ENCODE measurements at regions of chr15 and their contacts with region 1.

Region 1: DNA sequence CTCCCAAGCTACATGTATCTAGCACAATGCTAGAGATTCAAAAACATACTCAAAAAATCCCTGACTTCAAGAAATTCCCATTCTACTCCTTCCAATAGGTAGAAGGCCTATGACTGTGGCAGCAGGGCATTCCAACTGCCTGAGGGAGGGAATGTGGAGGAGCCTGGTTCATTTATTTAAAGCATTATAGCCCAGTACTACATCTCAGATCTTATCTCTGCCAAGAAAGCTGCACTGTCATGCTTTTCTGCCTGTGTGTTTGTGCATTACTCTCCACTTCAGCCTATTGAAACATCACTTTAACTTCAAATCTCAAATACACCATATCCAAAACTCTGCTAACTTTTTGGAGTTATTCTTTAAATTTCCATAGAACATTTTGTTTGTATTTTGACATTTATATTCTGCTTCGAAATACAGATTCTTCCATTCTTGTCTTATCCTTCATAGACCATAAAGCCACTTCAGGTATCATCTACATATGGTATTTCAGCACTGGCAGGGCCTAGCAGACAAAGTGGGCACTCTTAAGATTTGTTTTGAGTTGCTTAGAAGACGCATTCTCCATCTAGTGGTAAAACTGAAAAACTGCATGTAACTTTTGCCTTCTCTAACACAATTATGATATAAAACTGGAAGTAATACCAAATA is 59.1 kb upstream of the NEDD4 start:
- DNase-seq: peak in 7 of 9 donors; percentile 14 to 66 (median 55)
- ATAC-seq: peak; percentile 71
- H3K4me3 ChIP-seq: no peak overlapping the region
- H3K4me3 Mint-ChIP-seq: no peak overlapping the region
- H3K27ac ChIP-seq: no peak overlapping the region
- H3K27ac Mint-ChIP-seq: no peak overlapping the region
- H3K4me1 ChIP-seq: no peaks in the 10 kb centered on the region
- H3K4me1 Mint-ChIP-seq: peaks cover 0 to 5% (median 0%) of the 10 kb centered on the region in 7 donors
- H3K27me3 ChIP-seq: no peaks in the 10 kb centered on the region
- H3K27me3 Mint-ChIP-seq: no peaks in the 10 kb centered on the region

Region 2: DNA sequence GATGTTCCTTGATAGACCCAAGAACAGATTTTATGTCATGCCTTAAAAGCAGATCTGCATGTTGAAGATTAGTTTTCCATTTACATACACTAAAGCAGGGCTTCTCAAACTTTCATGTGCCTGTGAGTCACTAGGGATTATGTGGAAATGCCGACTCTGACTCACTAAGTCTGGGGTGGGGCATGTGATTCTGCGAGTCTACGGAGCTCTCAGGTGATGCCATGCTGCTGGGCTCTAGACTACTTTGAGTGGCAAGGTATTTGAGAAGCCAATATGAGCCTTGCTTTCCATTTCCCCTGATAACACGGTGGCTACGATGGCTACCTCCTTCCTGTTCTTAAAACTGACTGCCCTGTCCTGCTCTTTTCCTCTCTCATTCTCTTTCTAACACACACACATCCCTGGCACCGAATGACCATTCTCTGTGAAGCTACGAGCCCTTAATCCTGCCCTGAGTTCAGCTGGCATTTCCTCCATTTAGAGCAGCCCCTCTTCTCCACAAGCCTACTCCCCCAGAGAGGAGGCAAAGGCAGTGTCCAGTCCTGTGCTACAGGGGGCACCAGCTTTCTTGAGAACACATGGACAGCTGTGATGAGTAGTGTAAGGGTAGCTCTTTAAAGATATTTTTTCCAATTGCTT is 424.7 kb before region 1 on chr15:
- CTCF ChIA-PET with region 1: no interaction called
- POLR2A ChIA-PET with region 1: no interaction called
- intact Hi-C with region 1: no loop called
- DNase-seq: no peak
- ATAC-seq: no peak
- H3K4me3 ChIP-seq: no peak overlapping the region
- H3K4me3 Mint-ChIP-seq: no peak overlapping the region
- H3K27ac ChIP-seq: no peak overlapping the region
- H3K27ac Mint-ChIP-seq: peak overlapping the region in 1 of 9 donors; percentile 27
- H3K4me1 ChIP-seq: no peaks in the 10 kb centered on the region
- H3K4me1 Mint-ChIP-seq: no peaks in the 10 kb centered on the region
- H3K27me3 ChIP-seq: no peaks in the 10 kb centered on the region
- H3K27me3 Mint-ChIP-seq: peaks cover 0 to 11% (median 0%) of the 10 kb centered on the region in 5 donors

Region 3: DNA sequence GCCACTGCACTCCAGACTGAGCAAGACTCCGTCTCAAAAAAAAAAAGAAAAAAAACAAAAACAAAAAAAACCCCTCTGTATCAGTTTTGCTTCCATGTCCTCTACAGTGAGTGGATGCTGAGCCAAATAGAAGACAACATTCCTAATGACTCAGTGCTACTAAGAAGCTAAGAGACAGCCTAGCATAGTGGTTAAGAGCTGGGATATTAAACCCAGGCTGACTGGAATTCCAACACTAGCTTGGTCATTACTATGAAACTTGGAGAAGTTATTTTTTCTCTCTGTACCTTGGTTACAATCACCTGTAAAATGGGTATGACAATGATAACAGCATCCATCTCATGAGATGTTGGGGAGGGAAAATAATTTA is 403.5 kb before region 1 on chr15:
- CTCF ChIA-PET with region 1: interaction called, 6 read pairs
- POLR2A ChIA-PET with region 1: no interaction called
- intact Hi-C with region 1: loop called (anchors 1 to 2 kb)
- DNase-seq: no peak
- ATAC-seq: no peak
- H3K4me3 ChIP-seq: no peak overlapping the region
- H3K4me3 Mint-ChIP-seq: no peak overlapping the region
- H3K27ac ChIP-seq: no peak overlapping the region
- H3K27ac Mint-ChIP-seq: no peak overlapping the region
- H3K4me1 ChIP-seq: no peaks in the 10 kb centered on the region
- H3K4me1 Mint-ChIP-seq: no peaks in the 10 kb centered on the region
- H3K27me3 ChIP-seq: no peaks in the 10 kb centered on the region
- H3K27me3 Mint-ChIP-seq: peaks cover 0 to 6% (median 0%) of the 10 kb centered on the region in 5 donors

Region 4: GRCh38 chr15:55846116-55846707 is 206.3 kb before region 1 on chr15:
- CTCF ChIA-PET with region 1: no interaction called
- POLR2A ChIA-PET with region 1: no interaction called
- intact Hi-C with region 1: loop called in 1 of 2 experiments (anchors 1 kb)
- DNase-seq: peak in 8 of 9 donors; percentile 19 to 65 (median 52)
- ATAC-seq: peak; percentile 75
- H3K4me3 ChIP-seq: no peak overlapping the region
- H3K4me3 Mint-ChIP-seq: no peak overlapping the region
- H3K27ac ChIP-seq: no peak overlapping the region
- H3K27ac Mint-ChIP-seq: no peak overlapping the region
- H3K4me1 ChIP-seq: no peaks in the 10 kb centered on the region
- H3K4me1 Mint-ChIP-seq: peaks cover 0 to 3% (median 0%) of the 10 kb centered on the region in 7 donors
- H3K27me3 ChIP-seq: no peaks in the 10 kb centered on the region
- H3K27me3 Mint-ChIP-seq: no peaks in the 10 kb centered on the region

Region 5: GRCh38 chr15:55917881-55918296 is 134.6 kb before region 1 on chr15:
- CTCF ChIA-PET with region 1: interaction called, 3 read pairs
- POLR2A ChIA-PET with region 1: no interaction called
- intact Hi-C with region 1: loop called in 1 of 2 experiments (anchors 5 kb)
- DNase-seq: peak in 4 of 9 donors; percentile 3 to 26 (median 14)
- ATAC-seq: no peak
- H3K4me3 ChIP-seq: no peak overlapping the region
- H3K4me3 Mint-ChIP-seq: no peak overlapping the region
- H3K27ac ChIP-seq: no peak overlapping the region
- H3K27ac Mint-ChIP-seq: no peak overlapping the region
- H3K4me1 ChIP-seq: no peaks in the 10 kb centered on the region
- H3K4me1 Mint-ChIP-seq: no peaks in the 10 kb centered on the region
- H3K27me3 ChIP-seq: no peaks in the 10 kb centered on the region
- H3K27me3 Mint-ChIP-seq: no peaks in the 10 kb centered on the region

Region 6: GRCh38 chr15:56040081-56041035 is 12.2 kb before region 1 on chr15:
- CTCF ChIA-PET with region 1: interaction called, 4 read pairs
- POLR2A ChIA-PET with region 1: no interaction called
- intact Hi-C with region 1: loop called in 1 of 2 experiments (anchors 1 kb)
- DNase-seq: no peak
- ATAC-seq: no peak
- H3K4me3 ChIP-seq: no peak overlapping the region
- H3K4me3 Mint-ChIP-seq: no peak overlapping the region
- H3K27ac ChIP-seq: no peak overlapping the region
- H3K27ac Mint-ChIP-seq: peak overlapping the region in 1 of 9 donors; percentile 26
- H3K4me1 ChIP-seq: peaks cover 20 to 24% of the 10 kb centered on the region in 2 donors
- H3K4me1 Mint-ChIP-seq: peaks cover 8 to 62% (median 46%) of the 10 kb centered on the region in 7 donors
- H3K27me3 ChIP-seq: no peaks in the 10 kb centered on the region
- H3K27me3 Mint-ChIP-seq: peaks cover 0 to 2% (median 0%) of the 10 kb centered on the region in 5 donors